H1 (cell line): ENCODE measurements at regions of chr6 and their contacts with region 1.

Region 1: DNA sequence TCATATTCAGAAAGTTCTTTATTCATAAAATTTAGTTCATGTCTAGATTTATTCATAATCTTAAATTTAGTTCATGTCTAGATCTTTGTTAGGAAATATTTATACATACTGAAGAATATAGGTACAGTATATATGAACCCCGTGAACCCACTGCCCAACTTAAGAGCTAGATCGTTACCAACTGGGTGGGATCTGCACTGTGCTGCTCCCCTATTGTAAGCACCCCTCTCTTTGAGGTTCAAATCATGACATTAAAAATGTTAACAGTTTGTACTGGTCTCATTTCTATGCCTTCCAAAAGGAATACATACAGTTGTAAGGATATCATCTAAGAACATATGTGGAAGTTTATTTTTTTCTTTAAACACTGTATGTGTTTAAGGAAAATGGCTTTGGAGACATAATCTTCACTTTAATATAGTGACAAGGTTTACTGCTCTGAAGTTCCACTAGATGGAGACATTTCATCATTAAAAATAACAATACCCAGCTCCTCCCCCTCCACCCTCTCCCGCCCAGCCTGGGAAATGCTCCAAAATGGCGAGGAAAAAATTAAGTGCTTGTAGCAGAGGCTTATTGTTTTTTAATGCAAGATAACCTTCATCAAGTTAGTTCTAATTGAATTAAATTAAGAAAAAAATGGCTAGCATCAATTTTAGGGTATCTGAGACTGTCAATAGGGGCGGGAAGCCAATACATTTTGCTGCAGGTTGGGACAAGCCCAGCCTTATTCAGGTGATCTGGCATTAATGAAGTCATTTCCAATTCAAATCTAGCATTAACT is 104.1 kb upstream of the TRAF3IP2 start:
- DNase-seq: no peak
- H3K4me3 ChIP-seq: no peak overlapping the region
- H3K27ac ChIP-seq: no peak overlapping the region
- H3K4me1 ChIP-seq: peaks cover 0 to 6% (median 3%) of the 10 kb centered on the region in 4 experiments; a peak in 5 of 7 replicates
- H3K27me3 ChIP-seq: peaks cover 0 to 1% (median 0%) of the 10 kb centered on the region in 4 experiments; a peak in 1 of 7 replicates
- CTCF ChIP-seq: peak in 2 of 3 experiments; percentile 48 to 66; a peak in 3 of 4 replicates
- EP300 ChIP-seq: no peak
- POLR2A ChIP-seq: no peak
- RAD21 ChIP-seq: peak; percentile 85 to 86

Region 2: GRCh38 chr6:111799576-111800258 is 89.9 kb after region 1 on chr6:
- CTCF ChIA-PET with region 1: interaction called, 17 read pairs
- POLR2A ChIA-PET with region 1: no interaction called
- DNase-seq: no peak
- H3K4me3 ChIP-seq: no peak overlapping the region
- H3K27ac ChIP-seq: no peak overlapping the region
- H3K4me1 ChIP-seq: peaks cover 0 to 14% (median 7%) of the 10 kb centered on the region in 4 experiments; a peak in 5 of 7 replicates
- H3K27me3 ChIP-seq: no peaks in the 10 kb centered on the region
- CTCF ChIP-seq: peak in 2 of 3 experiments; percentile 65 to 74; a peak in 3 of 4 replicates
- EP300 ChIP-seq: no peak
- POLR2A ChIP-seq: no peak
- RAD21 ChIP-seq: peak; percentile 33 to 41; a peak in 2 of 4 replicates

Region 3: DNA sequence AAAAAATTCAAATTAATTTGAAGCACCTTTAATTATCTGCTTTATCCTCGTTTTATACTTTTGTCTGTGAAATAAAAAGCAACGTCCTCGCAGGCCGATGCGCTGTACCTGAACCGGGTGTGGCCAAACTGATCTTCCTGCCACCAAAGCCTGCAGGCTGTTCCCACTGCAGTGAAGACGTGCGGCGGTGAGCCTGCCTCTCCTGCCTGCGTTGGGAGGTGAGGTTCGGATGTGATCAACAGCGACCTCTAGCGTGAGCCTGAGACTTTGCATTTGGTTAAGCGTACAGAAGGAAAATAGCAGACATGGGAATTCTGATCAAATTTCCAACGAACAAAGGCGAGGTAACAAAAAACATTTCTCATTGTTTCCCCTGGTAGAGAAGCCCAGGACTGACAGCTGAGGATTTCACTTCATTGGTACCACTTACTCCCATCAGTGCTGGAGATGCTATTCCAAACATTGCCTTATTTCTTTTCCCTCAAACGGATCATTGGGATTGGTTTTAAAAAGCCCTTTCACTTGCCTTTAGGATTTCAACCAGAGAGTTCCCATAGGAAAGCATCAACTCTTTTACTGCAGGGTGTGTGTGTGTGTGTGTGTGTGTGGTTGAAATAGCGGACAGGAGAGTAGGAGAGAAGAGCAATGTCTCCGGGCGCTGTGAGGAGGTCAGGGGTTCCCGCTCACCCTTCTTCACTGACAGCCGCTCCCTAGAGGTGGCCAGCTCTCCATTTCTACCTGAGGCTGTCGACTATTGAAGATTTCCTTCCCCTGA is 287.5 kb after region 1 on chr6:
- CTCF ChIA-PET with region 1: interaction called, 10 read pairs
- POLR2A ChIA-PET with region 1: interaction called, 3 read pairs
- DNase-seq: peak; percentile 64 to 85
- H3K4me3 ChIP-seq: no peak overlapping the region
- H3K27ac ChIP-seq: no peak overlapping the region
- H3K4me1 ChIP-seq: peaks cover 0 to 6% (median 1%) of the 10 kb centered on the region in 4 experiments; a peak in 1 of 7 replicates
- H3K27me3 ChIP-seq: no peaks in the 10 kb centered on the region
- CTCF ChIP-seq: peak; percentile 82 to 93 (median 92)
- EP300 ChIP-seq: no peak
- POLR2A ChIP-seq: no peak
- RAD21 ChIP-seq: peak; percentile 100

Region 4: DNA sequence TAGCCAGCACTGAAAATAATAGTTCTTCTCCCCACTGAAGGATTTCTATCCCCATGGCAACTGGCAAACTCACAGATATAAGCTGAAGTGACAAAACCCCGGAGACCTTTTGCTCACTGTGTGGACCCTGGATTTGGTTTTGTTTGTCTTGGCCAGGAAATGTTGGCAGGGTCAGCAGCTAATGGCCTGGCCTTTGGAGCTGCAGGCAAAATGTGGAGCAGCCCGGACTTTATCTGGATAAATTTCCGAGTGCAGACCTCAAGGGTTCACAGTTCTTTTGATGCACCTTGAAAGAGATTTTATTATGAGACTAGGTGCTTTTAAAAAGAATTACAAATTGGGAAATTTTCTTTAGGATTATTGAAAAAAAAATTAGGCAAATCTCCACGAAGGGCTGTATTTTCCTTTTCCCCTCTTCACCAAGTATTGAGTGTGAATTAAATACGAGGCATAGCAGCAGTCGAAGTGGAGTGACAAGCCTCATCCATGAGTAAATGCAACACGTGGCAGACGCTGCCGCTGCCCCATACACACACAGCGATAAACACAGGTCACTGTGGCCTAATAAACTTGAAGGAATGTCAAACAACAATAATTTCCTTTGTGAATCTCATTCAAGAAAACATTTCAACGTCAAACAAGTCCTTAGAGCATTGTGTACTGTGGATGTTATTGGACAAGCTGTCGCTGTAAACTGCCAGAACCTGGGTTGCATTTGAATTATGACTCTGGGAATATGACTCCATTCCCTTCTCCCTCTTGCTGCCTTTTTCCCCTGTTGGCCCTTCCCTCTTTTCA is 309.0 kb after region 1 on chr6:
- CTCF ChIA-PET with region 1: interaction called, 14 read pairs
- POLR2A ChIA-PET with region 1: no interaction called
- DNase-seq: no peak
- H3K4me3 ChIP-seq: no peak overlapping the region
- H3K27ac ChIP-seq: no peak overlapping the region
- H3K4me1 ChIP-seq: no peaks in the 10 kb centered on the region
- H3K27me3 ChIP-seq: no peaks in the 10 kb centered on the region
- CTCF ChIP-seq: no peak
- EP300 ChIP-seq: no peak
- POLR2A ChIP-seq: no peak
- RAD21 ChIP-seq: no peak

Region 5: GRCh38 chr6:112029045-112029822 is 319.4 kb after region 1 on chr6:
- CTCF ChIA-PET with region 1: interaction called, 13 read pairs
- POLR2A ChIA-PET with region 1: no interaction called
- DNase-seq: peak; percentile 47 to 86
- H3K4me3 ChIP-seq: no peak overlapping the region
- H3K27ac ChIP-seq: no peak overlapping the region
- H3K4me1 ChIP-seq: no peaks in the 10 kb centered on the region
- H3K27me3 ChIP-seq: no peaks in the 10 kb centered on the region
- CTCF ChIP-seq: peak; percentile 72 to 86 (median 77)
- EP300 ChIP-seq: no peak
- POLR2A ChIP-seq: no peak
- RAD21 ChIP-seq: peak; percentile 61 to 71